AG04450 (cell line): ENCODE measurements at regions of chr18 and their contacts with region 1.

Region 1: GRCh38 chr18:3665780-3666525 is 216.0 kb downstream of the TGIF1 start:
- DNase-seq: peak; percentile 82
- H3K4me3 ChIP-seq: no peak overlapping the region
- H3K27ac ChIP-seq: peak overlapping the region; percentile 80
- H3K27me3 ChIP-seq: no peaks in the 10 kb centered on the region
- CTCF ChIP-seq: peak; percentile 97

Region 2: GRCh38 chr18:3297025-3297984 is 368.6 kb before region 1 on chr18:
- CTCF ChIA-PET with region 1: interaction called, 33 read pairs
- POLR2A ChIA-PET with region 1: no interaction called
- DNase-seq: peak; percentile 66
- H3K4me3 ChIP-seq: peak overlapping the region; percentile 68
- H3K27ac ChIP-seq: no peak overlapping the region
- H3K27me3 ChIP-seq: peaks cover 3% of the 10 kb centered on the region
- CTCF ChIP-seq: peak; percentile 29

Region 3: DNA sequence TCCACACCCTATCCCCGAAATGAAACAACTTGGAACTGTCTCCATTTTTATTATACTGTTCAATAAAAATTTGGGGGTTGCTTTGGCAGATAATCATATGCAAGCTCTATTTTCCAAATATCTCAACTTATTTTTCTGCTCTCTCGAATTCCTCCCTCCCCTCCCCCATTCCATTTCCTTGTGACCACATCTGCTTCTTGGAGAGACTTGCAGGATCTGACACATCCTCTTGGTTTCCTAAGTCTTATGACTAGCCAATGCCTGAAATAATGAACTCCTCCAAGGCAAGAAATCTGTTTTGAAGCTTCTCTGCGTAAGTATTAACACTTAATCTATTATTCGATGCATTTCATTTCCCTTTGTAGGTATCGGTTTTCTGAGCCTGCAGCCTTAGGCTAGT is 199.9 kb before region 1 on chr18:
- CTCF ChIA-PET with region 1: interaction called, 12 read pairs
- POLR2A ChIA-PET with region 1: no interaction called
- DNase-seq: no peak
- H3K4me3 ChIP-seq: no peak overlapping the region
- H3K27ac ChIP-seq: no peak overlapping the region
- H3K27me3 ChIP-seq: no peaks in the 10 kb centered on the region
- CTCF ChIP-seq: no peak

Region 4: GRCh38 chr18:3604498-3605408 is 61.2 kb before region 1 on chr18:
- CTCF ChIA-PET with region 1: interaction called, 22 read pairs
- POLR2A ChIA-PET with region 1: interaction called, 14 read pairs
- DNase-seq: peak; percentile 90
- H3K4me3 ChIP-seq: peak overlapping the region; percentile 57
- H3K27ac ChIP-seq: peak overlapping the region; percentile 100
- H3K27me3 ChIP-seq: no peaks in the 10 kb centered on the region
- CTCF ChIP-seq: no peak

Region 5: GRCh38 chr18:3679241-3679640 is 13.3 kb after region 1 on chr18:
- CTCF ChIA-PET with region 1: interaction called, 13 read pairs
- POLR2A ChIA-PET with region 1: no interaction called
- DNase-seq: no peak
- H3K4me3 ChIP-seq: no peak overlapping the region
- H3K27ac ChIP-seq: no peak overlapping the region
- H3K27me3 ChIP-seq: no peaks in the 10 kb centered on the region
- CTCF ChIP-seq: no peak

Region 6: GRCh38 chr18:3995476-3996102 is 329.6 kb after region 1 on chr18:
- CTCF ChIA-PET with region 1: interaction called, 32 read pairs
- POLR2A ChIA-PET with region 1: no interaction called
- DNase-seq: peak; percentile 54
- H3K4me3 ChIP-seq: no peak overlapping the region
- H3K27ac ChIP-seq: no peak overlapping the region
- H3K27me3 ChIP-seq: no peaks in the 10 kb centered on the region
- CTCF ChIP-seq: peak; percentile 93

Region 7: GRCh38 chr18:4130734-4131719 is 465.1 kb after region 1 on chr18:
- CTCF ChIA-PET with region 1: no interaction called
- POLR2A ChIA-PET with region 1: no interaction called
- DNase-seq: no peak
- H3K4me3 ChIP-seq: no peak overlapping the region
- H3K27ac ChIP-seq: no peak overlapping the region
- H3K27me3 ChIP-seq: no peaks in the 10 kb centered on the region
- CTCF ChIP-seq: 0 out of 2 replicates have a peak, but pooled peaks have one; percentile 10